ENCODE measurements at regions of chr12 and their contacts with region 1.

Region 1: GRCh38 chr12:75526655-75527511 is 15.5 kb upstream of the KRR1 start:
- DNase-seq: no peak

Region 2: DNA sequence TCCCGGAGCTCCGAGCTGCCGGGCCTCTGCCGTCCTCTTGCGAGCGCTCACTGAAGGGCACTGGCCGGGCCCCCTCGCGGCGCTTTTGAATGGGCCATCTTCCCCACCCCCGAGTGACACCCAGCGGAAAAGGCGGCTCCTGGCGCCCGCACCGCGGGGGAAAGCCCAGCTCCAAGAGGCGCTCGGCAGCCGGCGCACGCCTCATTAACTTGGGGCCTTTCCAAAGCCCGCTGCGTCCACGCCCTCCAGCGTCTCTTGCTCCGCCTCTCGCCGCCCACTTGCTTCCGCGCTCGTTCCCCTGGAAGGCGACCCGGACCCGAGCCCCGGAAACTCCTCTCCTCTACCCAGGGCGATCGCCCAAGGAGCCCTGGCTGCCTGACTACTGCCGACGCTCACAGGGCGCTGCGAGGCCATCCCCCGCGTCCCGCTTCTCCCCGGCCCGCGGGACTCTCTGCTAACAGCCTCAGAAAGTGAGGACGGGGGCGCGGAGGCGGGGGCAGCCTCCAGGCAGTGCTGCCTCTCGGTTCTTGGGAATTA is 504.7 kb after region 1 on chr12 and contains the start of gene PHLDA1:
- intact Hi-C with region 1: loop called (anchors 5 kb)
- DNase-seq: peak; percentile 98
- total RNA-seq, gene PHLDA1: 4.9 to 14.6 TPM

Region 3: DNA sequence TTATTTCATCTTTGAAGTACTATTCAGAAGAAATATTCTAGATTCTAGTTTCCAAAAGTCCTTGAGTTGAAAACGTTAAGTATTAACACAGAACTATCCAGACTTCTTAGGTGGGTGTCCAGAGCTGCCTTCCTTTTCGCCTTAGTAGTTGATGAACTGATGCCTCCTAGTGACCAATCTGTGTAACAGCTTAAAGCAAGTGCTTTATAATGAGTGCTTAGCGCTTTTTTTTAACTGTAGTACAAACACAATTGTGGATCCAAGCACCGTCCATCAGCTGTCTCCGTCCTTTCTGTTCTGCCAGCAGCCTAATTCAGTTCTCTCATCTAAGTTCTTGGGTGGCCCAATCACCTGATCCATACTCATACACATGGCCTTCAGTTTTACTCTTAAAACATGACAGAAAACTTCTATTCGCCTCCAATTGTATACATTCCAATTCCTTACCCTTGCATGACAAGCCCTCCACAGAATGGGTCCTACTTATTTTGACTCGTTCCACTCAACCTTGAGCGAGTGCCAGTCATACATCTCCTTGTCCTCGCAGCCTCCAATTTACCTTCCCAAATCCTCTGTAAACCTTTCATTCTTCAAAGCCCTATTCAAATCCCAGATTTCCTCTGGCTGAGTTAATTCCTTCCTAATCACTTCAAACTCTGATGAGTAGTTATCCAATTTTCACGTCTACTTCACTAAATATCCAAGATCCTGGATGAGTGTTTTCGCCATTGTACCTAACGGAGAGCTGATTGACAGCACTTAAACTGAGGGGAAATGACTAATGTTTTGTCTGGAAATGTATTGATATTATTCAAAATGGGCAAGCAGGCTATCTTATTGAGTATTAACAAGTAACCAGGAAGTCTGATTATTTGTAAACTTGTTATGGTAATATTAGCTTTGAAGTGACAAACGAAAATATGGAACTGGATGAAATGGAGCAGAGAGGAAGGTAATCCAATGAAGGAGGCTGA is 510.5 kb after region 1 on chr12:
- intact Hi-C with region 1: loop called (anchors 5 kb)
- DNase-seq: no peak